Activated naive CD4-positive, alpha-beta T cell treated with anti-CD3 and anti-CD28 coated beads, Interleukin-2, amount 10 ng/mL, durations not matched to agents 7 days and 5 days (primary cell): ENCODE measurements at regions of chr16 and their contacts with region 1.

Region 1: DNA sequence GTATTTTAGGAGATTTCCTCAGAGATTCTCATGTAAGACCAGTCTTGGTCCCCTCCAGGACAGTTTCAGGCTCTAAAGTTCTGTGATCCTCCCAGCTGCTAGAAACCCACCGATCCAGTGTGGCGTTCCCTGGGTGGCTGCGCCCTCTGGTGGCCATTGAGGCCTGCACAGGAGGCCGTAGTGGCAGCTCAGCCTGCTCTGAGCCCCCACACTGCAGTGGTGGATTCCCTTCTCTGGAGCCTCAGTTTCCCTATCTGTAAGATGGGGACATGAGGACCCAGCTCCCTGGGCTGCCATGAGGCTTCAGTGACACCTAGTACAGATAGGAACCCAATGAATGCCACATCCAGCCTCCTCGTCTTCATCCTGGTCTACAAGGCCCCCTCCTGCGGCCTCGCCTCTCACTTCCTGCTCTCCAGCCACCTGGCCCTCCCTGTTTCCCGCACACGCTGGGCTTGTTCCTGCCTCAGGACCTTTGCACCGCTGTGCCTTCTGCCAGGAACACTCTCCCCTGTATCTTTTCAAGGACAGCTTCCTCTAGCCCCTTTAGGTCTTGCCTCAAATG is 16.5 kb downstream of the CCDC102A start:
- DNase-seq: peak; percentile 86
- H3K4me3 Mint-ChIP-seq: no peak overlapping the region
- H3K27ac Mint-ChIP-seq: no peak overlapping the region
- H3K4me1 Mint-ChIP-seq: peaks cover 7% of the 10 kb centered on the region
- H3K27me3 Mint-ChIP-seq: no peaks in the 10 kb centered on the region

Region 2: DNA sequence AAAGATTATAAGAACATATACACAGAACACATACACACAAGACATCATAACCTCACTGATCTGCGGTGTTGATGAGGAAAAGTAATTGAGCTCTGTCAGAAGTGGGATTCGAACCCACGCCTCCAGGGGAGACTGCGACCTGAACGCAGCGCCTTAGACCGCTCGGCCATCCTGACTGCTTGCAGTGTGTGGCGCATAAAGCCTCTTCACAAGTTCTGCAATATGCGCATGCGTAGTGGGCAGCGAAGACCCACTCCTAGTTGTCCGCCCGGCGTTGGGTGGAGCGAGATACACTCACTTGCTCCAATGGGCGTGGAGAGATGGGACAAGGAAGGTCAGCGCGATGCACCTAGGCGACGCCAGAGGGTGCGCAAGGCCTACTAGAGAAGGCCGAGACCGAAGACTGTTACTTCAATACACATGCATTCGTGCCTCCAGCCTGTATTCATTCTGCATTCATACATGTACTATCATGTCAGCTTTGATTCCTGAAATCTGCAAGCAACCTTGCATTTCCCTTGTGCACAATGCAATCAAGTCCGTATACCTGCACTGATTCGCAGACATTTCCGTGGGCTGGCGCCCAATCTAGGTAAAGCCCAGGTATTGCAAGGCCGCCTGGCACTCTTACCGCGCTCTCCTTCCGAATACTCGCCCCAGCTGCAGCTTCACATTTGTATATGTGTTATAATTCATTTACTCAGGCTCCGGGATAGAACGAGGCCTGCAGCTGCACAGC is 219.3 kb before region 1 on chr16:
- CTCF ChIA-PET with region 1: interaction called, 13 read pairs
- DNase-seq: peak; percentile 99
- H3K4me3 Mint-ChIP-seq: no peak overlapping the region
- H3K27ac Mint-ChIP-seq: no peak overlapping the region
- H3K4me1 Mint-ChIP-seq: peaks cover 26% of the 10 kb centered on the region
- H3K27me3 Mint-ChIP-seq: peaks cover 32% of the 10 kb centered on the region

Region 3: GRCh38 chr16:57422026-57422944 is 97.6 kb before region 1 on chr16:
- CTCF ChIA-PET with region 1: interaction called, 94 read pairs
- DNase-seq: no peak
- H3K4me3 Mint-ChIP-seq: no peak overlapping the region
- H3K27ac Mint-ChIP-seq: no peak overlapping the region
- H3K4me1 Mint-ChIP-seq: peaks cover 15% of the 10 kb centered on the region
- H3K27me3 Mint-ChIP-seq: peaks cover 13% of the 10 kb centered on the region

Region 4: DNA sequence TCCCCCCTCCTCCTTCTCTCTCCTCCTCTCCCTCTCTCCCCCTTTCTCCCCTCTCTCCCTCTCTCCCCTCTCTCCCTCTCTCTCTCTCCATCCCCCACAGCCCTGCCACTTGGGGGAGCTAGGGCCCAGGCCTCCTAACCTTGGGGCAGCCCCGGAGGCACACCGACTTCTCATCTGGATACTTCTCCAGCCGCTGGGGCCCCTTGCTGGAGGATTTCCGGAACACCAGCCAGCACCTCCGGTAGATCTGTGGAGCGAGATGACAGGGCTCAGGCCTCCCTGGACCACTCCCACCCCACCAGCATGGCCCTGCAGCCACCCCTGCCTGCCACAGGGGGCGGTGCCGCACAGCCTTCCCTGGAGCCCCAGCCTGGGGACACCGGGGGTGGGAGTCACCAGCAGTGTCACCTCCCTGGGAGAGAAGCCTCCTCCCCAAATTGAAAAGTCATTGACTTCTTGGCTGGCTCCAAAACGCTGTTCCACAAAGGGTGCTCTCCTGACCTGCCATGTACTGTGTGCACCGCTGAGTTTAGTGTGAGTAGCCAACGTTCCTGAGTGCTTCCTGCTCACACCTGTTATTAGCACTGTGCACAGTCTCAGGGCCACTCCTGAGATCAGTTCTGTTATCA is 44.1 kb before region 1 on chr16:
- CTCF ChIA-PET with region 1: interaction called, 79 read pairs
- DNase-seq: peak; percentile 90
- H3K4me3 Mint-ChIP-seq: no peak overlapping the region
- H3K27ac Mint-ChIP-seq: peak overlapping the region; percentile 69
- H3K4me1 Mint-ChIP-seq: peaks cover 25% of the 10 kb centered on the region
- H3K27me3 Mint-ChIP-seq: peaks cover 8% of the 10 kb centered on the region

Region 5: DNA sequence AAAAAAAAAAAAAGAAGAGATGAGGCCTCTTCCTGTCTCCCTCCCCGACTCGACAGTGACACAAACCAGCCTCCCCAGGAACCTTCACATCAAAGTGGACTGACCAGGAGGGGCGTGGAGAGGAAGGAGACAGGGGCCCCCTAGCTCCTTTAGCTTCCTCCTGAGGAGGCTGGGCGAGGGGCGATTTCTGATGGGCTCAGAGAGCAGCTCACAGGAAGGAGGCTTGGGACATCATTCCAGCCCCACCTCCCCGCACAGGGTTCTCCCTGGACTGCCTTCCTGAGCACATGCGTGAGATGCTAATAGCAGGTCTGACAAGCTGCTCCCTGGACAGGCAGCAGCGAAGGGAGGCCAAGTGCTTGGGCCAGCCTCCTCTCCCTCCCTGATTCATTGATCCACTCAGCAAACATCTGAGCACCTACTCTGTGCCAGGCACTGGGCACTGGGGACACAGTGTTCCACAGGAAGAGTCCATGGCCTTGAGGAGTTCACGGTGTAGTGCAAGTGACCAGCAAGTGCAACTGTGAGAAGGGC is 19.2 kb before region 1 on chr16:
- CTCF ChIA-PET with region 1: interaction called, 11 read pairs
- DNase-seq: peak; percentile 53
- H3K4me3 Mint-ChIP-seq: no peak overlapping the region
- H3K27ac Mint-ChIP-seq: no peak overlapping the region
- H3K4me1 Mint-ChIP-seq: peaks cover 18% of the 10 kb centered on the region
- H3K27me3 Mint-ChIP-seq: peaks cover 21% of the 10 kb centered on the region

Region 6: GRCh38 chr16:57530104-57530521 is 10.2 kb after region 1 on chr16:
- CTCF ChIA-PET with region 1: interaction called, 19 read pairs
- DNase-seq: peak; percentile 86
- H3K4me3 Mint-ChIP-seq: peak overlapping the region; percentile 58
- H3K27ac Mint-ChIP-seq: peak overlapping the region; percentile 95
- H3K4me1 Mint-ChIP-seq: peaks cover 63% of the 10 kb centered on the region
- H3K27me3 Mint-ChIP-seq: no peaks in the 10 kb centered on the region